ENCODE measurements at regions of chr14 and their contacts with region 1.

Region 1: DNA sequence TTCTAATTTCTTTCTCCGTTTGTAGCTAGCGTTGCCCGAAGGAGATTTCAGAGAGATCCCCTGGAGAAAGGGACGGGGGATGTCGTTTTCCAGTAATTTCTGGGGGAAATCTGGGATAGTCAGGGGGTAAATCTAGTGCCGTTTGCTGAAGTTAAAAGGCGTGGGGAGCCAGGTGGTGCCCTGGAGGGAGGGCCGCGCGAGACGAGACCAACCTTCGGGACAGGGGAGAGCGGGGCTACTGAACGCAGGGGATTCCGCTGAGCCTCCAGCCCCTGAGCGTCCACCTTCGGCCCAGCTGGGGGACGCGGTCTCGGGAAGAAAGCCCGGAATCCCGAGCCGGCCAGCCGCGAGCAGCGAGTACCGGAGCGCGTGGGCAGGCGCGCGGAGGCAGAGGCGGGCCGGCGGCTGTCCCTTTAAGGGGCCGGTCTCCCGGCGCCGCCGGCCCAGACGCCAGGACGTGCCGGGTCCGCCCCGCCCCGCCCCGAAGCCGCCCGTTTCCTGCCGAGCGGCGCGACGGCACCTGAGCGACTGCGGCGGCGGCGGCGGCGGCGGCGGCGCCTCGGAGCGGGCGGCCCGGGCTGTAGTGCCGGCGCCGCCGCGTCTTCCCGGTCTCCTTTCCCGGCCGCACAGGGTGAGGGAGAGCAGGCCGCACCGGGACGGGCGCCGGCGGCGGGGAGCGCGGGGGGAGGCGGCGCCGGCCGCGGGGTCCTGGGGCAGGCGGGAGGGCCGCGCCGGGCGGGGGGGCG is at the start of gene KTN1:
- DNase-seq: peak; percentile 93
- ATAC-seq: peak; percentile 96
- total RNA-seq, gene KTN1: 288 TPM

Region 2: GRCh38 chr14:55389330-55389729 is 190.6 kb before region 1 on chr14:
- intact Hi-C with region 1: no loop called
- DNase-seq: no peak
- ATAC-seq: no peak

Region 3: GRCh38 chr14:55624913-55625312 is 45.0 kb after region 1 on chr14:
- intact Hi-C with region 1: loop called (anchors 5 kb)
- DNase-seq: no peak
- ATAC-seq: no peak

Region 4: DNA sequence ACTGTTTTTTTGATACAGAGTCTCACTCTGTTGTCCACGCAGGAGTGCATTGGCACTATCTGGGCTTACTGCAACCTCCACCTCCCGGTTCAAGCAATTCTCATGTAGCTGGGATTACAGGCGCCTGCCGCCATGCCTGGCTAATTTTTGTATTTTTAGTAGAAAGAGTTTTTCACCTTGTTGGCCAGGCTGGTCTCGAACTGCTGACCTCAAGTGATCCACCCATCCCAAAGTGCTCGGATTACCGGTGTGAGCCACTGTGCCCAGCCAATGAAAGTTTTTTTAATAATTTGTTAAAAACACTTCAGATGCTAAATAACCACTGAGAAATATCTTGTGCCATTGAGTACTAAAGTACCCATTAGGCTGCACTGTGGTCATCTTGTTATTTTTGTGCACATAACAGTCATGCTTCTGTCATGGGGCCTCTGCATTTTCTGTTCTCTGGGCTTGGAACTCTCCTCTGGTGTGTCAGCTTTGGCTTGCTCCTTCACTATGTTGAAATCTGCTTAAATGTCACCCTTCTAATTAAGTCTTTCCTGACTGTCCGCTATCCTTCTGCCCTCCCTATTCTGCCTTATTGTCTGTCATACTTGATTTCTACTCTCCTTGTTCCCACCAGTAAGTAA is 105.2 kb after region 1 on chr14:
- intact Hi-C with region 1: loop called (anchors 5 kb)
- DNase-seq: no peak
- ATAC-seq: peak; percentile 71